ENCODE measurements at regions of chr7 and their contacts with region 1.

Region 1: DNA sequence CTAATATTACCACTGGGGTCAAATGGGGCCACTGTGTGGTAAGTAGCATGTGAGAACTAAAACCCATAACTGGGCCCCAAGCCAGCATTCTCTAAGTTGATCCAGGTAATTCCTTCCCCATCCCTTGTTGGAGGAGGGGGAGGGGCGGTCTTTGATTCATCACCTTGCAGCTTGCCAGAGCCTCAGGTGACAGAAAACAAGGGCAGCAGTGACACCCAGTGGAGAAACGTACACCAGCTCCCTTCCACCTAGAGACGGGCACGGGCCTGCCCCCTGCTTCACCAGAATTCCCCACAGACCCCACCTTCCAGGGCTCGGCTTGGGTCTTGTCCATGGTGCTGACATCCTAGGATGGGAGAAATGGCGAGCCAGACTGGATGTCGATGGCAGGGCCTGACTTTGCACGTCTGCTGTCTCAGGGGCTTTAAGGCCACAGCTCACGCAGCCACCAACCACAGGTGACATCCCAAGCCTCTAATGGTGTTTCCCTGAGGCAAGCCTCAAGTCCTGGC is 102.0 kb downstream of the STRA8 start:
- DNase-seq: peak; percentile 69 to 81
- ATAC-seq: peak; percentile 92 to 97
- H3K4me3 ChIP-seq: no peak overlapping the region
- H3K27ac ChIP-seq: peak overlapping the region; percentile 28 to 43; a peak in 2 of 6 replicates
- H3K4me1 ChIP-seq: peaks cover 8% of the 10 kb centered on the region; the same call in 1 of the 3 replicates
- CTCF ChIP-seq: peak; percentile 69
- EP300 ChIP-seq: no peak
- POLR2A ChIP-seq: no peak
- RAD21 ChIP-seq: peak; percentile 93 to 94

Region 2: DNA sequence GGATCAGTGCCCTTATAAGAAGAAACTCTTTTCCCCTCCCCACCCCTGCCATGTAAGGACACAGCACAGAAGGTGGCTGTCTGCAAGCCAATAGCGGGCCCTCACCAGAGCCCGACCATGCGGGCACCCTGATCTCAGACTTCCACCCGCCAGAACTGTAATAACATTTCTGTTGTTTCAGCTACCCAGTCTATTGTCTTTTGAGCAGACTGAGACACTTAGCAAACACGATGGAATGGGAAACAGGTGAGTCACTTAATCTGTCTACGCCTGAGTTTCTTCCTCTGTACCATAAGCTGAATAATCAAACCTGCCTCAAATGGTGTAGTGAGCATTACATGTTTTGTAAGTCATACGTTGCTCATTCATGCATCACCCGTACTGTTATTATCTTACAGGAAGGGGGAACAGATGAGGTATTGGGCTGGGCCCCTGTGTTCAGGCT is 43.9 kb before region 1 on chr7:
- CTCF ChIA-PET with region 1: interaction called, 26 read pairs
- POLR2A ChIA-PET with region 1: no interaction called
- DNase-seq: peak; percentile 62 to 91
- ATAC-seq: peak; percentile 96 to 97
- H3K4me3 ChIP-seq: no peak overlapping the region
- H3K27ac ChIP-seq: peak overlapping the region; percentile 81 to 95
- H3K4me1 ChIP-seq: peaks cover 25% of the 10 kb centered on the region
- CTCF ChIP-seq: no peak
- EP300 ChIP-seq: peak in 1 of 2 experiments; percentile 55; a peak in 1 of 5 replicates
- POLR2A ChIP-seq: no peak
- RAD21 ChIP-seq: no peak

Region 3: GRCh38 chr7:135320277-135320676 is 15.4 kb before region 1 on chr7:
- CTCF ChIA-PET with region 1: interaction called, 17 read pairs
- POLR2A ChIA-PET with region 1: no interaction called
- DNase-seq: peak in 1 of 2 experiments; percentile 44
- ATAC-seq: peak; percentile 53 to 78; a peak in 4 of 6 replicates
- H3K4me3 ChIP-seq: no peak overlapping the region
- H3K27ac ChIP-seq: peak overlapping the region; percentile 40 to 44; a peak in 3 of 6 replicates
- H3K4me1 ChIP-seq: peaks cover 8% of the 10 kb centered on the region
- CTCF ChIP-seq: no peak
- EP300 ChIP-seq: no peak
- POLR2A ChIP-seq: no peak
- RAD21 ChIP-seq: no peak

Region 4: GRCh38 chr7:135355377-135356042 is 19.8 kb after region 1 on chr7:
- CTCF ChIA-PET with region 1: interaction called, 13 read pairs
- POLR2A ChIA-PET with region 1: no interaction called
- DNase-seq: peak in 1 of 2 experiments; percentile 37
- ATAC-seq: peak in 1 of 2 experiments; percentile 68; a peak in 2 of 6 replicates
- H3K4me3 ChIP-seq: no peak overlapping the region
- H3K27ac ChIP-seq: no peak overlapping the region
- H3K4me1 ChIP-seq: peaks cover 8% of the 10 kb centered on the region; the same call in 1 of the 3 replicates
- CTCF ChIP-seq: no peak
- EP300 ChIP-seq: no peak
- POLR2A ChIP-seq: no peak
- RAD21 ChIP-seq: no peak